ENCODE measurements at regions of chr5 and their contacts with region 1.

Region 1: DNA sequence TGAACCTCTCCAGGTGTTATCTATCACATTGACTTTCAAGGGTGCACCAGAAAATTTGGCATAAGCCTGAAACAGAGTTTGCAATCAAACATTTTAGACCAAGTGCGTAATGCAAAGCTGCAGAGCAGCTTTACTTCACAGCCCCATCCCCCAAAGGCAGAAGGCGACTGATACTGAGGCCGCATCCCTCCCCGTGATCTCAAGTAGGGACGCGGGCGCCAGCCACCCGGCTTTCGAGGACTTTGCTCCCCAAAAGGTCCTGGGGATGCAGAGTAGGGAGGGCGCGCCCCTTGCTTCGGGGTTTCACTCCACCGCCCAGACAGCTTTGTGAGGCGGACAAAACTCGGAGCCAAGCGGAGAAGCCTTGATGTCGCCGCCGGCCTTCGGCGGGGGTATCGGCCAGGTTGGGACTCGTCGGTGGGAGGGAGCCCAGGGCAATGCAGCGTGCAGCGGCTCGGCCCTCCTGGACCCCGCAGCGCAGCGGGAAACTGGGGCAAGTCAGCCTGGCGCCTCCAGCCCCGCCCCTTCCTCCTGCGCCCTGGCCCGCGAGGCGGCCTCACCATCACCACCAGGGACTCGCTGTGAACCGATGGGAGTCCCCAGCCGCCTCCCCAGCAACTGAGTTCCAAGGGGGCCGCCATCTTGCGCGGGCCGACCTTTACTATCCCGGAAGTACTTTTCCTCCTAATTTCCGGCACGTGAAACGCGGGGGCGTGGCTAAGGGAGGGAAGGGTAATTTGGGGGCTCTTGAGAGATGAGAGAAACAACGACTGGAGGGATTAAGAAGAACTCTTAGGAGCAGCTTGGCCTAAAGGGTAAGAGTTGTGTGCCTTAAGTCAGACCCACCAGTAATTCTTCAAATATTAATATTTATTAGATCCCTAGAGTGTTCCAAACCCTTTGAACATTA is at the start of gene MTX3:
- DNase-seq: peak; percentile 94
- ATAC-seq: peak; percentile 84
- H3K4me3 Mint-ChIP-seq: peak within 1 kb of the TSS; percentile 89
- H3K27ac Mint-ChIP-seq: peak within 1 kb of the TSS; percentile 98
- H3K4me1 Mint-ChIP-seq: peaks cover 49% of the 10 kb centered on the region
- H3K27me3 Mint-ChIP-seq: peaks cover 2% of the 10 kb centered on the region
- total RNA-seq, gene MTX3: 11.9 to 14.3 TPM

Region 2: GRCh38 chr5:79514391-79515105 is 476.3 kb before region 1 on chr5:
- CTCF ChIA-PET with region 1: no interaction called
- POLR2A ChIA-PET with region 1: no interaction called
- intact Hi-C with region 1: loop called (anchors 2 kb)
- DNase-seq: peak; percentile 94
- ATAC-seq: peak; percentile 82
- H3K4me3 Mint-ChIP-seq: peak overlapping the region; percentile 93
- H3K27ac Mint-ChIP-seq: peak overlapping the region; percentile 97
- H3K4me1 Mint-ChIP-seq: peaks cover 35% of the 10 kb centered on the region
- H3K27me3 Mint-ChIP-seq: peaks cover 15% of the 10 kb centered on the region

Region 3: GRCh38 chr5:79845448-79846197 is 145.2 kb before region 1 on chr5:
- CTCF ChIA-PET with region 1: no interaction called
- POLR2A ChIA-PET with region 1: no interaction called
- intact Hi-C with region 1: loop called in 1 of 2 experiments (anchors 2 kb)
- DNase-seq: peak; percentile 70
- ATAC-seq: peak; percentile 94
- H3K4me3 Mint-ChIP-seq: no peak overlapping the region
- H3K27ac Mint-ChIP-seq: peak overlapping the region; percentile 33
- H3K4me1 Mint-ChIP-seq: peaks cover 11% of the 10 kb centered on the region
- H3K27me3 Mint-ChIP-seq: peaks cover 8% of the 10 kb centered on the region

Region 4: DNA sequence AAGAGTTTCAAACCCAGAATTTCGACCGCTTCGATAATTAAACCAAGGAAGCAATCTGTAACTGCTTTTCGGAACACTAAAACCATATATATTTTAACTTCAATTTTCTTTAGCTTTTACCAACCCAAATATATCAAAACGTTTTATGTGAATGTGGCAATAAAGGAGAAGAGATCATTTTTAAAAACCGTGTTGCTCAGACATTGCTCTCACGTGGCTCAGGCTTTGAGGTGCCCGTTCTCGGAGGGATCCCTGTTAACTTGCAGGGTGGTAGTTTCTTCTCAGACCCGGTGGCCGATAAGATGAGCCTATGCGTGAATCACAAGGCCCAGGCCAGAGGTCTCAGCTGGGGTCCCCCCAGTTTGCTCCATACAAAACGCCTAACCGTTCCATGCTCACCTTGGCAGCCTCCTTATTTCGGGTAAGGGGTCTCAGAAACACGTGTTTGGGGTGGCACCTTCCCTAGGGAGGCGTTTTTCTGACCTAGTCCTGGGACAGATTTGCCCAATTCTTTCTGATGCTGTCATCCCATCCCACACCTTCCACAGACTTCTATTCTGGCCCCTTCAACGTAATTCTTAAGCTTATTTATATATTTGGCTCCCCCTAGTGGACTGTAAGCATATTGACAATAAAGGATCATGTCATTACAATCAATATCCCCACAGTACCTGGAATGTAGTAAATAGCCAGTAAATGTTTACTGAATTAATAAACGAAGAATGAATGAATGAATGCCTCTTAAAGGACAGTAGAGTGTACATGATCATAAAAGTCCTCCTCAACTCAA is 92.4 kb after region 1 on chr5:
- CTCF ChIA-PET with region 1: interaction called, 12 read pairs
- POLR2A ChIA-PET with region 1: interaction called, 5 read pairs
- intact Hi-C with region 1: loop called in 1 of 2 experiments (anchors 2 kb)
- DNase-seq: peak; percentile 40
- ATAC-seq: peak; percentile 82
- H3K4me3 Mint-ChIP-seq: peak overlapping the region; percentile 41
- H3K27ac Mint-ChIP-seq: peak overlapping the region; percentile 76
- H3K4me1 Mint-ChIP-seq: peaks cover 12% of the 10 kb centered on the region
- H3K27me3 Mint-ChIP-seq: no peaks in the 10 kb centered on the region

Region 5: DNA sequence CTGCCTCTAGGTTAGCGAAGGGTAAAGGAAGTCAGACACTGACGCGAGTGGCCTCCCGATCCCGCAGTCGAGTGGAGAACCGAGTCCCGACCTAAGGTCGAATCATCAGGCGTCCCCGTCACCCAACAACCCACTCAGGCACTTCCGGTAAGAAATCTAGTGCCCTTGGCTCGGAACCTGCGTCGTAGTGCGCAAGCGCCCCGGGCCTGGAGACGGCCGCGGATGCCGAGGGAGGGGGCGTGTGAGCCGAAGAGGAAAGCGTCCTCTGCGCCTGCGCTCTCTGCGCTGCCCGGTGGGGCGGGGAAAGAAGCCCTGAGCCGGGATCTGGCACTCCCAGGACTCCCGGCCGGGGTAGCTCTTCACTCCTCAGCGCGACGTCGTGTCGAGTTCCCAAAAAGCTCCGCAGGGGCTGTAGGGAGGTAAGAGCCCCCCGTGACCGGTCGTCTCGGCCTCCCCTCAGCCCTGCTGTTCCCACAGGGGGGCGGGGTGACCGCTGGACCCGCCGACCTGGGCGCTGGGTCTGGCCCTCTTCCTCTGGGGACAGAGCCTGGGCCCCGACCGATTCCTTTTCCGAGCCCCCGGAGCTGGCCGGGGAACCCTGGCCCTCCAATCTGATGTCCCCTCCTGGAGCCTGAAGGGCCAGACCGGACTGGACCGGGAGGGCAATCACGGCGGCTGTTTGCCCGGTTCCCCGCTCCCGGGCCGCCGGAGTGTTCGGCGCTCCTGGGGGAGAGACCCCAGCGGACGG is 417.1 kb after region 1 on chr5 and contains the start of gene ZFYVE16:
- CTCF ChIA-PET with region 1: no interaction called
- POLR2A ChIA-PET with region 1: no interaction called
- intact Hi-C with region 1: loop called in 1 of 2 experiments (anchors 1 kb)
- DNase-seq: peak; percentile 98
- ATAC-seq: peak; percentile 94
- H3K4me3 Mint-ChIP-seq: peak within 1 kb of the TSS; percentile 82
- H3K27ac Mint-ChIP-seq: peak within 1 kb of the TSS; percentile 94
- H3K4me1 Mint-ChIP-seq: peaks cover 17% of the 10 kb centered on the region
- H3K27me3 Mint-ChIP-seq: no peaks in the 10 kb centered on the region
- total RNA-seq, gene ZFYVE16: 11.2 to 11.8 TPM